Naive thymus-derived CD4-positive, alpha-beta T cell (primary cell): ENCODE measurements at regions of chr3 and their contacts with region 1.

Region 1: DNA sequence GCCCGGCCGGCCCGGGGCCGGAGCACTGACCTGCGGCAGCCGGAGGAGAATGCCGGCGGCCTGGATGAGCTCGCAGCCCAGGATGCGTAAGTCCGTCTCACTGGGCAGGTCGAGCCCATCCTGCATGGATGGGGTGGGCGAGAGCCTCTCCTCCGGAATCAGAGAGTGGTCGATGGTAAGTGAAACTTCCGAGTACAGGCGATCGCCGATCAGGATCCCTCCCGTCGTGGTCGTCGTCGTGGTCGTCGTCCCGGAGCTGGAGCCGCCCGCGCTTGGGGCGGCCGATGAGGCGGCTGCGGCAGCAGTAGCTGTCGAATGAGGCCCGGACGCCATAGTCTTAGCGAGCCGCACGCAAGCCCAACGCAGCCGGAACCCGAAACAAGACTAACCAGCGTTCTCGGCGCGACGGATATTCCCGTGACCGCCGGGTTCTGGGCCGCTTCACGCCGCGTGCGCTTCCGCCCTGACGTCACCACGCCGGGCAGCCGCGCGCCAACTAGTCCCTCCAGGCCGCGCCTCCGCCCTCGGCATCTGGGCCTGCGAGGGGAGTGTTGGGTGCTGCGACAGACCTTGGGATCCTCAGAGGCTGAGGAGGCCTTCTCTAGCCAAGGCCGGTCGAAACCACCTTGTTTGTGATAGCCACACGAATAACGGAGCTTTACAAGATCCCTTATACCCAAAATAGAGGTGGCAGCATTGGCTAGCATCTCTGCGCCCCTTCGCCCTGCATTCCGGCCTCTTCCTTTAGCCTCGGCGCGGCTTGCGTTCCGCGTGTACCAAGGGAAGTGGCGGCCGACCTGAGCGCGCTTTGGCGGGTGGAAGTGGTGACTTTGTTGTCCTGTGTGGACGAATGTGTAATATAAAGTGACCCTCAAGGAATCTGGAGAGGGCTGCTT is at the start of gene CCNL1:
- DNase-seq: peak; percentile 94 to 98 (median 97)
- ATAC-seq: peak; percentile 88
- H3K4me3 ChIP-seq: peak within 1 kb of the TSS; percentile 92
- H3K4me3 Mint-ChIP-seq: peak within 1 kb of the TSS; percentile 91 to 100 (median 96)
- H3K27ac ChIP-seq: peak within 1 kb of the TSS; percentile 97
- H3K27ac Mint-ChIP-seq: peak within 1 kb of the TSS; percentile 96 to 100 (median 98)
- H3K4me1 ChIP-seq: peaks cover 39 to 45% of the 10 kb centered on the region in 2 donors
- H3K4me1 Mint-ChIP-seq: peaks cover 37 to 69% (median 65%) of the 10 kb centered on the region in 7 donors
- H3K27me3 ChIP-seq: no peaks in the 10 kb centered on the region
- H3K27me3 Mint-ChIP-seq: no peaks in the 10 kb centered on the region
- total RNA-seq, gene CCNL1: 230 to 1,170 (median 374) TPM

Region 2: DNA sequence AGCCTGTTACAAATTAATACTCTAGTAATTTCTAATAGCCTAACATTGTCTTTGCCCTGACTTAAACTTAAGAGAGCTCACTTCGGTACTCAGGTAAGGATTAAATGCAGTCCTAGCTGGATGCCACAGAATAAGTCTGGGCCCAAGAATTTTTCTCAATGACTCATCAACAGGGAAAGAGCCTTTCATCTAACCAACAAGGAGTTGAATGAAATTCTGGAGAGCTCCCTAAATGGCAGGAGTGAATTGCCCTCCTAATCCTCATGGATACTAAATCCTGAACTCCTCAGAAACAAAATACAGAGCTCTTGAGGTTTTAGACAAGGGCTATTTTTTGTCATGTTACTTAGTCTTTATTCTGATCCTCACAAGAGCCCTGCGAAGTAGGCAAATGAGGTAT is 1574.6 kb before region 1 on chr3:
- CTCF ChIA-PET with region 1: no interaction called
- POLR2A ChIA-PET with region 1: no interaction called
- intact Hi-C with region 1: no loop called
- DNase-seq: no peak
- ATAC-seq: no peak
- H3K4me3 ChIP-seq: no peak overlapping the region
- H3K4me3 Mint-ChIP-seq: no peak overlapping the region
- H3K27ac ChIP-seq: no peak overlapping the region
- H3K27ac Mint-ChIP-seq: no peak overlapping the region
- H3K4me1 ChIP-seq: no peaks in the 10 kb centered on the region
- H3K4me1 Mint-ChIP-seq: peaks cover 0 to 10% (median 0%) of the 10 kb centered on the region in 7 donors
- H3K27me3 ChIP-seq: no peaks in the 10 kb centered on the region
- H3K27me3 Mint-ChIP-seq: peaks cover 0 to 30% (median 5%) of the 10 kb centered on the region in 5 donors

Region 3: GRCh38 chr3:155870133-155870944 is 1289.7 kb before region 1 on chr3 and contains the start of gene GMPS:
- CTCF ChIA-PET with region 1: no interaction called
- POLR2A ChIA-PET with region 1: interaction called, 9 read pairs
- intact Hi-C with region 1: loop called in 1 of 2 experiments (anchors 1 kb)
- DNase-seq: peak; percentile 87 to 98 (median 96)
- ATAC-seq: peak; percentile 97
- H3K4me3 ChIP-seq: peak within 1 kb of the TSS; percentile 90
- H3K4me3 Mint-ChIP-seq: peak within 1 kb of the TSS; percentile 92 to 100 (median 98)
- H3K27ac ChIP-seq: peak within 1 kb of the TSS; percentile 94
- H3K27ac Mint-ChIP-seq: peak within 1 kb of the TSS; percentile 89 to 97 (median 96)
- H3K4me1 ChIP-seq: peaks cover 8% of the 10 kb centered on the region in 2 donors
- H3K4me1 Mint-ChIP-seq: peaks cover 17 to 35% (median 26%) of the 10 kb centered on the region in 7 donors
- H3K27me3 ChIP-seq: no peaks in the 10 kb centered on the region
- H3K27me3 Mint-ChIP-seq: no peaks in the 10 kb centered on the region
- total RNA-seq, gene GMPS: 36.3 to 85.1 (median 45.4) TPM

Region 4: GRCh38 chr3:156816800-156817645 is 343.0 kb before region 1 on chr3:
- CTCF ChIA-PET with region 1: no interaction called
- POLR2A ChIA-PET with region 1: interaction called, 14 read pairs
- intact Hi-C with region 1: loop called (anchors 1 kb)
- DNase-seq: peak; percentile 68 to 90 (median 81)
- ATAC-seq: peak; percentile 89
- H3K4me3 ChIP-seq: peak overlapping the region; percentile 64
- H3K4me3 Mint-ChIP-seq: peak overlapping the region; percentile 87 to 97 (median 95)
- H3K27ac ChIP-seq: peak overlapping the region; percentile 67
- H3K27ac Mint-ChIP-seq: peak overlapping the region; percentile 90 to 99 (median 96)
- H3K4me1 ChIP-seq: peaks cover 8 to 10% of the 10 kb centered on the region in 2 donors
- H3K4me1 Mint-ChIP-seq: peaks cover 6 to 72% (median 29%) of the 10 kb centered on the region in 7 donors
- H3K27me3 ChIP-seq: no peaks in the 10 kb centered on the region
- H3K27me3 Mint-ChIP-seq: no peaks in the 10 kb centered on the region

Region 5: DNA sequence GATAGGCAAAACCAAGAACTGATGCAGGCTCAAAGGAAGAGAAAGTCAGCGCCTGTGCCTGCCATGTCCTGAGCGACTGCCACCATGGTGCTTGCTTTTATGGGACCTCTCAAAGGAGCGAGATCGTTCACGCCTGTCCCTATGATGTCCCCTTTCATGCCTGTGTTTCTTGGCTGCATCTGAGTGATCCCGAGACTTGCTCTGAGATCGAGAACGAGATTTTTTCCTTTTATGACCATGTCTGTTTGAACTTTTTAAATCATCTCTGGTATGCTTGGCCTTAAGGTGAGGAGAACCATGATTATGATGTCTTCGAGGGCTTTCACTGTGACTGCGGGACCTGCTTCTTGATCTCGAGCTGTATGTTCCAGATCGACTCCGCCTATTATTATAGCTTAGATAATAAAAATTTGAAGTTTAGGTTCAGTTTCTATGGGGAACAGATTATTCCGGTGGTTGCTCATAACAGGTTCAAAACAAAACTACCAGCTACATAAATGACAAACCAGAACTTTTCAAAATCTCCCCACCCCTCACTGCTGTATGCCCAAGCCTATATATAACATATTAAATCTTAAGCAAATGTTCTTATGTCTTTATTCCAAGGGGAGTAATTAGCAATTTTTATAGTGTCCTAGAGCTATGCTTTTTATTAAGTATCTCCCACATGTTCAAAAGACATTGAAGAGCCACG is 11.7 kb before region 1 on chr3:
- CTCF ChIA-PET with region 1: no interaction called
- POLR2A ChIA-PET with region 1: interaction called, 36 read pairs
- intact Hi-C with region 1: loop called (anchors 1 kb)
- DNase-seq: no peak
- ATAC-seq: peak; percentile 11
- H3K4me3 ChIP-seq: no peak overlapping the region
- H3K4me3 Mint-ChIP-seq: no peak overlapping the region
- H3K27ac ChIP-seq: no peak overlapping the region
- H3K27ac Mint-ChIP-seq: peak overlapping the region in 1 of 9 donors; percentile 48
- H3K4me1 ChIP-seq: peaks cover 0 to 5% of the 10 kb centered on the region in 2 donors
- H3K4me1 Mint-ChIP-seq: peaks cover 6 to 49% (median 34%) of the 10 kb centered on the region in 7 donors
- H3K27me3 ChIP-seq: no peaks in the 10 kb centered on the region
- H3K27me3 Mint-ChIP-seq: no peaks in the 10 kb centered on the region

Region 6: DNA sequence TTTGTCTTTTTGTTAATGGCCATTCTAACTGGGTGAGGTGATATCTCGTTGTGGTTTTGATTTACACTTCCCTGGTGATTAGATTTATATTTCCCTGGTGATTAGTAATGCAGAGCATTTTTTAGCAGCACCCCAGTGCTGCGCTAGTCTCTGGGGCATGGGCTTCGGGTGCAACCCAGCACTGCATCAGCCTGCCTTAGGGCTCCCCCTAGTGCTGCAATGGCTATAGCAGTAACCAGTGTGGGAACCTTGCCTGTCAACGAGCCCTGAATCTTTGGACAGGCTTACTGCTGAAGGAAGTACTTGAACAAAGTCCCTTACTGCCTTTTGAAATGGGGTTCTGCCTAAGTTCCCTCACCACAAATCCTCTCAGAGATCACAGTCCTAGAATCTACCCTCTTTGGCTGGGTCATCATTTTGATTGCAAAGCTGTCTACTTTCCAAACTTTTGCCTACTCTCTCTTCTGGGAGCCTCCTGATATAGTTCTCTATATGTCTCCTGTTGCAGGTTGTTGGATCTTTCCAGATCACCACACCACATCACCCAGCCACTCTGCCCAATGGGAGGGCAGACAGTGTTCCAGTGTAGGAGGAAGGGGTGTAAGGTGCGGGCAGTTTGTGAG is 79.2 kb after region 1 on chr3:
- CTCF ChIA-PET with region 1: no interaction called
- POLR2A ChIA-PET with region 1: interaction called, 5 read pairs
- intact Hi-C with region 1: loop called (anchors 1 kb)
- DNase-seq: peak; percentile 42 to 72 (median 58)
- ATAC-seq: peak; percentile 100
- H3K4me3 ChIP-seq: no peak overlapping the region
- H3K4me3 Mint-ChIP-seq: no peak overlapping the region
- H3K27ac ChIP-seq: no peak overlapping the region
- H3K27ac Mint-ChIP-seq: no peak overlapping the region
- H3K4me1 ChIP-seq: no peaks in the 10 kb centered on the region
- H3K4me1 Mint-ChIP-seq: peaks cover 0 to 6% (median 4%) of the 10 kb centered on the region in 7 donors
- H3K27me3 ChIP-seq: no peaks in the 10 kb centered on the region
- H3K27me3 Mint-ChIP-seq: peaks cover 0 to 8% (median 0%) of the 10 kb centered on the region in 5 donors

Region 7: DNA sequence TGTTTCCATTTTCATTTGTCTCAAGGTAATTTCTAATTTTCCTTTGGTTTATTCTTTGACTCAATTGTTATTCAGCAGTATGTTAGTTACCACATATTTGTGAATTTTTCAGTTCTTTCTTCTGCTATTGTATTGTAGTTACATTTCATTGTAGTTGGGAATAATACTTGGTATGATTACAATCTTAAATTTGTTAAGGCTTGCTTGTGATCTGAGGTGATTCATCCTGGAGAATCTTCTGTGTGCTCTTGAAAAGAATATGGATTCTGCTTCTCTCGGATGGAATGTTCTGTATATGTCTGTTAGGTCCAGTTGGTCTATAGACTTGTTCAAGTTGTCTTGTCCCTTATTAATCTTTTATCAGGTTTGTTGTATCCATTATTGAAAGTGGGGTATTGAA is 406.6 kb after region 1 on chr3:
- CTCF ChIA-PET with region 1: no interaction called
- POLR2A ChIA-PET with region 1: no interaction called
- intact Hi-C with region 1: no loop called
- DNase-seq: no peak
- ATAC-seq: no peak
- H3K4me3 ChIP-seq: no peak overlapping the region
- H3K4me3 Mint-ChIP-seq: no peak overlapping the region
- H3K27ac ChIP-seq: no peak overlapping the region
- H3K27ac Mint-ChIP-seq: no peak overlapping the region
- H3K4me1 ChIP-seq: no peaks in the 10 kb centered on the region
- H3K4me1 Mint-ChIP-seq: no peaks in the 10 kb centered on the region
- H3K27me3 ChIP-seq: no peaks in the 10 kb centered on the region
- H3K27me3 Mint-ChIP-seq: peaks cover 9 to 18% (median 14%) of the 10 kb centered on the region in 5 donors